HEK293 (cell line): ENCODE measurements at regions of chr11 and their contacts with region 1.

Region 1: DNA sequence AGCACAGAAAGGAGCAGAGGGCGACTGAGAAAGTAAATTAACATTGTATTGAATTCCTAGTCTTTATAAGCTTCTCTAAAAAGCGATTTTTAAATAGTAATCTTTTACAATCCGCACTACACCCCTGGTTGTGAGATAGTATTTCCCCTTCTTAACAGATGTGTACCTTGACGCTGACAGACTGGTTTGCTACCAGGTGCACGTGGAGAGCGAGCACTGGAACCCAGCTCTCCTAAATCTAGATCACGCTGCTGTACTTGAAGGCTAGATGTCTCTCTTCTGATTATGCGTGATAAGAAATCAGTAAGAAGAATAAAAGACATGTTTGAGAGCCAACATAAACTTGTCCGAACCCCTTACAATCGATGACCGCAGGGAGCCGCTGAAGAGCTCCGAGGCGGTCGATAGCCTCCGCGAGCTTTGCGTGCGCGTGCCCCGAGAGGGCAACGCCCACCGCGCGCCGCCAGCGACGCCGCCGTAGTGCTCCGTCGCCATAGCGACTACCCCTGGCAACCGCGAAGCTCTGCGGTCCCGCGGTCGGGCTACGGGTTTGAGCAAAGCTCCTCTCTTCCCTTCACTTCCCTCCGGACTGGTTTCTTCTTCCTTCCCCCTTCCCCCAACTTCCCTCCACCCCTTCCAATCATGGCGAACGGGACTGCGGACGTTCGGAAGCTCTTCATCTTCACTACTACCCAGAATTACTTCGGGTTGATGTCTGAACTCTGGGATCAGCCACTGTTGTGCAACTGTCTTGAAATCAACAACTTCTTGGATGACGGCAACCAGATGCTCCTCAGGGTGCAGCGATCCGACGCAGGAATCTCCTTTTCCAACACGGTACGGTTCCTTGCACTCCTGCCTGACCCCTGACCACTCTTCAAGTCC is at the start of gene DYNC2H1:
- H3K4me3 ChIP-seq: peak within 1 kb of the TSS; percentile 88
- H3K27ac ChIP-seq: peak within 1 kb of the TSS; percentile 54
- H3K4me1 ChIP-seq: no peaks in the 10 kb centered on the region
- CTCF ChIP-seq: peak; percentile 57; the same call in 1 of the 2 replicates

Region 2: DNA sequence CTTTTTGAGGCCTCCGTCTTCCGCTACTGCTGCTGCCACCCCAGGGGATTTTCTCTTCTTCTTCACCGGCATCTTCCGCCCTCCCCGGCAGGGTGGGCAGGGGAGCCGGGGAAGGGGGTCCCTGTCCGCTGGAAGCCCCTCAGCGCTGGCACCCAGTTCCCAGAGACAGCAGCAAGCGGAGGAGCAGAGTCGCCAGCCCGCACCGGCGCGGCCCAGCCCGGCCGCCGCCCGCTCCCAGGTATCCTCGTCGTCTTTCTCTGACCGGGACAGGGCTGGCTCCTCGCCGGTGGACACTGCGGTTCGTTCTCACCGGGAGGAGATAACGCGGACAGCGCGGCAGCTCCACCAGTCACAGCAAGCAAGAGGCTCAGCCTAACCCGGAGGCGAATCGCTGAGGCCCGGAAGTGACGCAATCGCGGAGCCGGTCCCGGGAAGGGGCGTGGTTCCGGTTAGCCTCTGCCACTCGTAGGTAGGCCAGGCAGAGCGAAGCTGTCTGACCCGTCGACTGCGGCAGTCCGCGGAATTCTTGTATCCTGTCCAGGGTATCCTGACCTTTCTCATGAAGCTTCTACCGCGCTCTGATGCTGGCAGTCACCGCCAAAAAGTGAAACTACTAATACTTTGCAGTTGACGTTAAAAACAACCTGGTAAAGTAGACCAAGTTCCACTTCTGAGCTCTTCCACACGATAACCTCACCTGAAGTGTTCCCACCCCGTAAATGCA is 17.2 kb before region 1 on chr11 and contains the start of gene DCUN1D5:
- CTCF ChIA-PET with region 1: interaction called, 11 read pairs
- POLR2A ChIA-PET with region 1: interaction called, 47 read pairs
- H3K4me3 ChIP-seq: peak within 1 kb of the TSS; percentile 90
- H3K27ac ChIP-seq: peak within 1 kb of the TSS; percentile 78
- H3K4me1 ChIP-seq: no peaks in the 10 kb centered on the region
- CTCF ChIP-seq: no peak

Region 3: DNA sequence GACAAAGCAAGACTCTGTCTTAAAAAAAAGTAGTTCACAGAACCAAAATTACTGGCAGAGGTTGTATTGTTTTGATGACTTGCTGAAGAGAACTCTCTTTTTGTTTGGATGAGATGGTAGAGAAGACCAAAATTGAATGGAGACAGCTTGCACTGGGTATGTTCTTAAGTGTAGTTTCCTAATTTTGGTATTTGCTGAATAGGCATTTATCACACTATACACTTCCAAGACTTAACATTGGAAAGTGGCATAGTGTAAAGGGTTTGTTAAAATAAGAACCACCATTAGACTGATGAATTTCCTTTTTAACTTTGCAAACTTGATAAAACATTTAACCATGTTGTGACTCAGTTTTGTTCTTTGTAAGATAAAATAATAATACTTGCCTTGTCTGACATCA is 11.9 kb before region 1 on chr11:
- CTCF ChIA-PET with region 1: interaction called, 19 read pairs
- POLR2A ChIA-PET with region 1: interaction called, 47 read pairs
- H3K4me3 ChIP-seq: no peak overlapping the region
- H3K27ac ChIP-seq: no peak overlapping the region
- H3K4me1 ChIP-seq: peaks cover 3% of the 10 kb centered on the region; the same call in 1 of the 2 replicates
- CTCF ChIP-seq: no peak